K562 (cell line): ENCODE measurements at regions of chr11 and their contacts with region 1.

Region 1: DNA sequence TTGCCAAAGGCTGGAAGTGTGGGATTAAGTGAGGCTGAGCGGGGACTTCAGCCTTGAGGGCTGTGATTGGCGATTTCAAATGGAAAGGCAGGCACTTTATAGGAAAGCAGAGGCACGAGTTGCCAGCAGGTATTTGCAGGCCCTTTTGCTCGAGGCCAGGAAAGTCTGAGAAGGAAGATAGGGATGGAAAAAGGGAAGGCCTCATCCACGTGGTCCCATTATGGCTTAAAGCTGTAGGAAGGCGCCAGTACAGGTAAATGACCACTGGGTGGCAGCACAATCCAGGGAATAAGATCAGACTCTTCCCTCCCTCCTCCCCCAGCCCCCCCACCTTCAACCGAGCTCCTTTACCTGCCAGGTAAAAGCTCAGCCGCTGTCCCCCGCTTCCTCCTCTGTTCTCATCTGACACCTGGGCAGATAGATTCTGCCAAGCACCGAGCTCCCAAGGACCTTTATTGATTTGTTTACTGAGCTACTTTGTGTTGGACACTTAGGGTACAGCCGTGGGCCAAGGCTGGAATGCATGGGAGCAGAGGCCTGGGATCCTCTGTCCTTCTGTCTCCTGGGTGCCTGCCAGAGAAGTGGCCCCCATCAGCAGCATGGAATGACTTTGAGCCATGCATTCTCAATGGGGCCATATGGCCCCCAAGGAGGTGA is 7.5 kb downstream of the P2RX3 start:
- DNase-seq: peak; percentile 78 to 87 (median 84)
- ATAC-seq: peak; percentile 82
- H3K4me3 ChIP-seq: no peak overlapping the region
- H3K27ac ChIP-seq: no peak overlapping the region
- H3K4me1 ChIP-seq: peaks cover 6 to 16% of the 10 kb centered on the region in 2 experiments; a peak in 4 of 5 replicates
- H3K27me3 ChIP-seq: no peaks in the 10 kb centered on the region; a peak in 1 of 5 replicates
- CTCF ChIP-seq: peak; percentile 68 to 79 (median 70)
- EP300 ChIP-seq: no peak
- POLR2A ChIP-seq: no peak
- RAD21 ChIP-seq: peak; percentile 62

Region 2: GRCh38 chr11:56841210-56841810 is 504.4 kb before region 1 on chr11:
- CTCF ChIA-PET with region 1: no interaction called
- POLR2A ChIA-PET with region 1: no interaction called
- in situ Hi-C with region 1: no loop called
- intact Hi-C with region 1: loop called (anchors 2 kb)
- DNase-seq: peak; percentile 38 to 61 (median 52)
- ATAC-seq: peak; percentile 68
- H3K4me3 ChIP-seq: no peak overlapping the region
- H3K27ac ChIP-seq: no peak overlapping the region
- H3K4me1 ChIP-seq: no peaks in the 10 kb centered on the region
- H3K27me3 ChIP-seq: no peaks in the 10 kb centered on the region
- CTCF ChIP-seq: peak; percentile 56 to 71 (median 62)
- EP300 ChIP-seq: no peak
- POLR2A ChIP-seq: no peak
- RAD21 ChIP-seq: peak; percentile 74

Region 3: GRCh38 chr11:57417056-57417455 is 71.4 kb after region 1 on chr11:
- CTCF ChIA-PET with region 1: no interaction called
- POLR2A ChIA-PET with region 1: no interaction called
- in situ Hi-C with region 1: no loop called
- intact Hi-C with region 1: no loop called
- DNase-seq: no peak
- ATAC-seq: no peak
- H3K4me3 ChIP-seq: no peak overlapping the region
- H3K27ac ChIP-seq: no peak overlapping the region; the same call in 2 of the 3 replicates
- H3K4me1 ChIP-seq: no peaks in the 10 kb centered on the region; a peak in 3 of 5 replicates
- H3K27me3 ChIP-seq: no peaks in the 10 kb centered on the region
- CTCF ChIP-seq: no peak
- EP300 ChIP-seq: no peak
- POLR2A ChIP-seq: no peak
- RAD21 ChIP-seq: no peak

Region 4: DNA sequence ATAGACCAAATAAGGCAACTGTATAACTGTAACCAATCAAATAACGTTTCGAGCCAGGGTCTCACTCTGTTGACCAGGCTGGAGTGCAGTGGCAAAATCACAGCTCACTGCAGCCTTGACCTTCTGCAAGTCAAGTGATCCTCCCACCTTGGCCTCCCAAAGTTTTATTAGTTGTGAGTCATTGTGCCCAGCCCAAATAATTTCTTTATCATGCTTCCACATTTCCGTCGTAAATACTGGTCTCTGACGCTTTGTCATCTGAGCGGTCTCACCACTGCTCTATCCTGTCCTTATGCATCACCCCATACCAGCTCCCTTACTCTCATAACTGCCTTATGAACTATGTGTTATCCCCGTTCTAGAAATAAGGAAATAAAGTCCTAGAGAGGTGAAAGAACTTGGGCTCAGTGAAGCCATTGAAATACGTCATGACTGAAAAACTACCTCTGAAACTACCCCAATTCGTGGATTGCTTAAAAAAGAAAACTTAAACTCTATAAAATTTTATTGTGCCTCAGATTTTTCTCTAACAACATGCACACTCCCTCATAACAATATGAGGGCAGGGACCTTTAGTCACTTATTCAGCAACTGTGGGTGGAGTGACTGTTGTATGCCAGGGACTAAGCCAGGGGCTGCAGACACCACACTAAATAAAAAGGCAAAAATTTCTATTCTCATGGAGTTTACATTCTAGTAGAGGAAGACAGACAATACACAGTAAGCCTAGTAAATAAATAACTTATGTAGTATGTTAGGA is 98.9 kb after region 1 on chr11:
- CTCF ChIA-PET with region 1: no interaction called
- POLR2A ChIA-PET with region 1: no interaction called
- in situ Hi-C with region 1: no loop called
- intact Hi-C with region 1: no loop called
- DNase-seq: peak in 2 of 4 experiments; percentile 47 to 55
- ATAC-seq: peak; percentile 58
- H3K4me3 ChIP-seq: no peak overlapping the region
- H3K27ac ChIP-seq: no peak overlapping the region
- H3K4me1 ChIP-seq: peaks cover 0 to 7% of the 10 kb centered on the region in 2 experiments; a peak in 3 of 5 replicates
- H3K27me3 ChIP-seq: no peaks in the 10 kb centered on the region; a peak in 1 of 5 replicates
- CTCF ChIP-seq: no peak
- EP300 ChIP-seq: no peak
- POLR2A ChIP-seq: no peak
- RAD21 ChIP-seq: no peak

Region 5: GRCh38 chr11:57644748-57645688 is 299.3 kb after region 1 on chr11:
- CTCF ChIA-PET with region 1: interaction called, 4 read pairs
- POLR2A ChIA-PET with region 1: no interaction called
- in situ Hi-C with region 1: loop called (anchors 5 kb)
- intact Hi-C with region 1: loop called (anchors 2 kb)
- DNase-seq: peak; percentile 83 to 87 (median 86)
- ATAC-seq: peak; percentile 84
- H3K4me3 ChIP-seq: no peak overlapping the region
- H3K27ac ChIP-seq: no peak overlapping the region
- H3K4me1 ChIP-seq: peaks cover 31 to 34% of the 10 kb centered on the region in 2 experiments
- H3K27me3 ChIP-seq: peaks cover 0 to 15% of the 10 kb centered on the region in 2 experiments; a peak in 2 of 5 replicates
- CTCF ChIP-seq: peak; percentile 80 to 85 (median 82)
- EP300 ChIP-seq: no peak
- POLR2A ChIP-seq: no peak
- RAD21 ChIP-seq: peak; percentile 62 to 70

Region 6: DNA sequence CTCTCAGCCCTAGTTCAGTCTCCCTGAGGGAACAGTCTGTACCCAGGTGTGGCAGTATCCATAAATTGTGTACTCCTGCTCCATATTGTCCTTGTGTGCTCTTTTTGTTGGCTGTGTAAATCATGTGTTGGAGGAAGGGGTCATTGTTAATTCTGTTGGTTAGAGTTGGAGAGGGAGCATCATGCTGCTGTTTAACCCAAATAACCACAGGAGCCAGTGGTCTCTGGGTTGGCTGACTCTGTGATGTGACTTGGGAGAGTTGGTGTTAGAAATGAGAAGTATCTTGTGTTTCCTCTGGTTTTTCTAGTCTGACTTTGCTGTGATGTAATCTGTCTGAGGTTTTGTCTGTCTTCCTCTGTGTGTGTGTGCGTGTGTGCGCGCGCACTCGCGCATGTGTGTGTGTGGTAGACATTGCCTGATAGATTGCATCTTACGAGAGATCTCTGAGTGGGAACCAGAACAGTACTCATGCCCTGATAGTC is 446.4 kb after region 1 on chr11:
- CTCF ChIA-PET with region 1: no interaction called
- POLR2A ChIA-PET with region 1: no interaction called
- in situ Hi-C with region 1: no loop called
- intact Hi-C with region 1: loop called (anchors 10 kb)
- DNase-seq: peak in 1 of 4 experiments; percentile 44
- ATAC-seq: peak; percentile 45
- H3K4me3 ChIP-seq: no peak overlapping the region
- H3K27ac ChIP-seq: 0 out of 3 replicates have a peak overlapping the region, but pooled peaks have one; percentile 2
- H3K4me1 ChIP-seq: peaks cover 6 to 11% of the 10 kb centered on the region in 2 experiments
- H3K27me3 ChIP-seq: no peaks in the 10 kb centered on the region
- CTCF ChIP-seq: no peak
- EP300 ChIP-seq: no peak
- POLR2A ChIP-seq: no peak
- RAD21 ChIP-seq: no peak

Region 7: GRCh38 chr11:58513747-58514367 is 1168.2 kb after region 1 on chr11:
- CTCF ChIA-PET with region 1: no interaction called
- POLR2A ChIA-PET with region 1: no interaction called
- in situ Hi-C with region 1: loop called (anchors 10 kb)
- intact Hi-C with region 1: loop called (anchors 5 kb)
- DNase-seq: peak; percentile 26 to 66 (median 39)
- ATAC-seq: peak; percentile 94
- H3K4me3 ChIP-seq: no peak overlapping the region
- H3K27ac ChIP-seq: no peak overlapping the region
- H3K4me1 ChIP-seq: no peaks in the 10 kb centered on the region
- H3K27me3 ChIP-seq: no peaks in the 10 kb centered on the region
- CTCF ChIP-seq: peak; percentile 54 to 80 (median 74); a peak in 5 of 6 replicates
- EP300 ChIP-seq: no peak
- POLR2A ChIP-seq: no peak
- RAD21 ChIP-seq: peak; percentile 77 to 86